Motor neuron (in vitro differentiated cells): ENCODE measurements at regions of chr11 and their contacts with region 1.

Region 1: GRCh38 chr11:103326070-103326794 is 217.0 kb downstream of the DYNC2H1 start:
- ATAC-seq: peak; percentile 56 to 98 (median 77)
- H3K4me3 ChIP-seq: no peak overlapping the region
- H3K27ac ChIP-seq: no peak overlapping the region
- H3K4me1 ChIP-seq: no peaks in the 10 kb centered on the region

Region 2: DNA sequence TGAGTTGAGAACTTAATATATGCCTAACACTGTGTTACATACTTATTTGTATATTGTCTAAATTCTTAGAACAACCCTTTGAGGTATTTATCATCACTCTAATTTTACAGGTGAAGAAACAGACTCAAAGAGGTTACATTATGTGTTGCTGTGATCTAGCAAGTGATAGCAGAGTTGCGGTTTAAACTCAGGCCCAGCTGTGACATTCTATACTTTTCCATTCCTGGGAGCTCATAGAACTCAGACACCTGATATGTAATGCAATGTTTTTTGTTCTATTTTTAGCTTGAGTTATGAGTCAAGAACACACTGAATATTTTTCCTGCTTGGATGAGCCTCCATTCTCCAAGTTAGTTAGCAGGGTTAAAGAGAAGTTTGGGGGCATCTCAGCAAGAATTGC is 260.5 kb after region 1 on chr11:
- in situ Hi-C with region 1: loop called in 2 of 9 experiments (anchors 25 kb)
- ATAC-seq: no peak
- H3K4me3 ChIP-seq: no peak overlapping the region
- H3K27ac ChIP-seq: no peak overlapping the region
- H3K4me1 ChIP-seq: peaks cover 3 to 16% of the 10 kb centered on the region in 2 donors

Region 3: GRCh38 chr11:103601225-103601846 is 275.1 kb after region 1 on chr11:
- in situ Hi-C with region 1: loop called in 3 of 9 experiments (anchors 25 kb)
- ATAC-seq: peak; percentile 41 to 86 (median 67)
- H3K4me3 ChIP-seq: no peak overlapping the region
- H3K27ac ChIP-seq: no peak overlapping the region
- H3K4me1 ChIP-seq: no peaks in the 10 kb centered on the region